WTC11 (cell line): ENCODE measurements at regions of chr19 and their contacts with region 1.

Region 1: DNA sequence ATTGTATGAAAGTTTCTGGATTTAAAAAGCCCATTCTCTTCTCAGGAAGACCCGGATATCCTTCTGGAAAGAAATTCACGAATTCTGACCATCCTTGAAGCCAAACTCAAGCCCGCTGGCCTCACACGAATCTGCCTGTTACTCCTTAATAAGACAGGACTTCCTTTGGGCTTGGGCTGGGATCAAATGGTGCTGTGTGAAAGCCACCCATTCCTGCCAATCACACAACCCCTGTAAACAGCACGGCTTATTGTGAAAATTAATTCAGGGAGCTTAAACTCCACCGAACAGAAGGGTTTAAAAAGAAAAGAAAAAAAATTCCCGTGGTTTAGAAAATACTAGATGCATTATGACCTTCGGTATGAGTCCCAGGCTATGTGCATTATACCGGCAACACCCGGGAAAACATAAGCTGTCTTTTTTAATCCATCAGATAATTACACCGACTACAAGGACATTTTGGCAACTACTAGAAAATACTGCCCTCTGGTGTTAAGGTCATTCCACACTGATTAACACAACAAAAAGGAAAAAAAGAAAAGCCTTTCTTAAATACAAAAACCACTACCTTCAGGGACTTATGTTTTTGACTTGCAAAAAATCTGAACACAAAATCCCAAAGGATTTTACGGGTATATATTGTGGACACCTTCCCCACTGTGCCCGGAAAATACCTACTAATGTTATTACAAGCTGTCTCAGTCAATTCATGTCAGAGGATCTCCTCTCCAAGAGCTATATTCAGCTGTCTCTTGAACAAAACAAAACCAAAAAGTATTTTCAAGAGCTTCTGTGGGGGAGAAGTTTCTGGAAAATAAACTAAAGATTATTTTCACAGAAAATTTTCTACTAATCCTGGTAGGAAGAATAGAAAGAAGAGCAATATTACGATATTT is 76.0 kb upstream of the LSM14A start:
- DNase-seq: peak; percentile 16
- ATAC-seq: peak; percentile 76
- H3K4me3 Mint-ChIP-seq: peak overlapping the region; percentile 56
- H3K27ac Mint-ChIP-seq: no peak overlapping the region; the same call in 1 of the 2 replicates
- H3K4me1 Mint-ChIP-seq: peaks cover 11% of the 10 kb centered on the region; the same call in 1 of the 2 replicates
- H3K27me3 Mint-ChIP-seq: no peaks in the 10 kb centered on the region
- CTCF ChIP-seq: peak; percentile 62

Region 2: GRCh38 chr19:33795370-33796163 is 300.7 kb before region 1 on chr19:
- CTCF ChIA-PET with region 1: interaction called, 27 read pairs
- POLR2A ChIA-PET with region 1: interaction called, 3 read pairs
- DNase-seq: peak; percentile 88
- ATAC-seq: peak; percentile 66
- H3K4me3 Mint-ChIP-seq: peak overlapping the region; percentile 68
- H3K27ac Mint-ChIP-seq: no peak overlapping the region; the same call in 1 of the 2 replicates
- H3K4me1 Mint-ChIP-seq: peaks cover 45% of the 10 kb centered on the region
- H3K27me3 Mint-ChIP-seq: 0 out of 2 replicates have a peak, but pooled peaks cover 3% of the 10 kb centered on the region
- CTCF ChIP-seq: peak; percentile 75

Region 3: GRCh38 chr19:33883859-33884519 is 212.3 kb before region 1 on chr19:
- CTCF ChIA-PET with region 1: interaction called, 11 read pairs
- POLR2A ChIA-PET with region 1: no interaction called
- DNase-seq: peak; percentile 56
- ATAC-seq: peak; percentile 79
- H3K4me3 Mint-ChIP-seq: peak overlapping the region; percentile 57
- H3K27ac Mint-ChIP-seq: peak overlapping the region; percentile 97
- H3K4me1 Mint-ChIP-seq: peaks cover 49% of the 10 kb centered on the region
- H3K27me3 Mint-ChIP-seq: no peaks in the 10 kb centered on the region
- CTCF ChIP-seq: no peak

Region 4: GRCh38 chr19:33982706-33983105 is 113.6 kb before region 1 on chr19:
- CTCF ChIA-PET with region 1: no interaction called
- POLR2A ChIA-PET with region 1: no interaction called
- DNase-seq: no peak
- ATAC-seq: no peak
- H3K4me3 Mint-ChIP-seq: no peak overlapping the region
- H3K27ac Mint-ChIP-seq: no peak overlapping the region
- H3K4me1 Mint-ChIP-seq: no peaks in the 10 kb centered on the region
- H3K27me3 Mint-ChIP-seq: peaks cover 2% of the 10 kb centered on the region; the same call in 1 of the 2 replicates
- CTCF ChIP-seq: no peak

Region 5: GRCh38 chr19:33998739-33999345 is 97.4 kb before region 1 on chr19:
- CTCF ChIA-PET with region 1: interaction called, 13 read pairs
- POLR2A ChIA-PET with region 1: no interaction called
- DNase-seq: no peak
- ATAC-seq: no peak
- H3K4me3 Mint-ChIP-seq: no peak overlapping the region
- H3K27ac Mint-ChIP-seq: no peak overlapping the region
- H3K4me1 Mint-ChIP-seq: peaks cover 10% of the 10 kb centered on the region
- H3K27me3 Mint-ChIP-seq: no peaks in the 10 kb centered on the region
- CTCF ChIP-seq: no peak

Region 6: DNA sequence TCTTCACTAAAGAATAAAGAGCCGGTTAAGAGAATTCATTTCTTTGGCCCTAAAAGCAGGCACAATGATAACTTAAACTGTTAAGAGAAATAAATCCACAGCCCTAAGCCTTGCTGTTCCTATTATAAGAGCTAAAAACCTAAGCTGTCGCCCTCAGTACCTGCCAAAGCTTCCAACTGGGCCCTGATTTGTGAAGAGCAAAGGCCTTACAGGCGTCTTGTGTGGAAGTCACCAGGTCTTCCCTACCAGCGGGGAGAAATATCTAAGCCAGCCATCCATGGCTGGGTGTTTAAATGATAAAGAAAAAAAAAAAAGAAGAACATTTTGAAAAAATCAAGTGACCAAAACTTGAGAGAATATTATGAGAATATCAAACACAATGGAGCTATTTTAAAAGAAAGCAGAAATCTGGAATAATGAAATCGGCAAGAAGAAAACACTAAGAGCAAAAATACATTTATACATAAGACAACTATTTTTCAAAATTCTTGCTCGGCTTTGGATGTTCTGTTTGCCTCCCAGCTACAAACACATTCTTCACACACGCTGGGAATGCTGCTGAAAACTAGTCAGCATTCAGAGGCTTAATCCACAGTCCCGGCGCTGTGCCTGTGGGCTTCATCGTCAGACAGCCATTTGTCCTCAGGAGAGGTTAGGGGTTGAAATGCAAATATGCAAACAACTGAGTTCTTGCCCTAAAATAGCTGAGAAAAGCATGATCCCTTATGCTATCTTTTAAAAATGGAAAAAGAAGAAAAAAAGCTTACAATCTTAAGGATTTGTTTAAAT is 13.8 kb before region 1 on chr19:
- CTCF ChIA-PET with region 1: interaction called, 26 read pairs
- POLR2A ChIA-PET with region 1: no interaction called
- DNase-seq: peak; percentile 38
- ATAC-seq: peak; percentile 78
- H3K4me3 Mint-ChIP-seq: no peak overlapping the region
- H3K27ac Mint-ChIP-seq: peak overlapping the region; percentile 90
- H3K4me1 Mint-ChIP-seq: peaks cover 38% of the 10 kb centered on the region
- H3K27me3 Mint-ChIP-seq: no peaks in the 10 kb centered on the region
- CTCF ChIP-seq: no peak

Region 7: GRCh38 chr19:34184880-34185491 is 88.7 kb after region 1 on chr19:
- CTCF ChIA-PET with region 1: no interaction called
- POLR2A ChIA-PET with region 1: no interaction called
- DNase-seq: no peak
- ATAC-seq: no peak
- H3K4me3 Mint-ChIP-seq: no peak overlapping the region
- H3K27ac Mint-ChIP-seq: peak overlapping the region; percentile 59
- H3K4me1 Mint-ChIP-seq: peaks cover 59% of the 10 kb centered on the region
- H3K27me3 Mint-ChIP-seq: no peaks in the 10 kb centered on the region
- CTCF ChIP-seq: no peak

Region 8: DNA sequence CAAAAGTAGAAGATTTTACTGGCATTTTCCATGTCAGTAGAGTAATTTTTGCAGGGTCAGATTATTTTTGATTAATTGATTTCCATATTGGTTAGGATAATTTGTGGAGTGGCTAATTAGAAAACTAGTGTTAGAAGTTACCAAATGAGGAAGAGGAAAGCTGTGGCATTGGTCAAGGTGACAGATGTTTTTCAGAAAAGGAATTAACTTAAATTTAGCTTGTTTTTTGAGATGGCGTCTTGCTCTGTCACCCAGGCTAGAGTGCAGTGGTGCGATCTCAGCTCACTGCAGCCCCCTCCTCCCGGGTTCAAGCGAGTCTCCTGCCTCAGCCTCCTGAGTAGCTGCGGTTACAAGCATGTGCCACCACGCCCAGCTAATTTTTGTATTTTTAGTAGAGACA is 104.9 kb after region 1 on chr19:
- CTCF ChIA-PET with region 1: no interaction called
- POLR2A ChIA-PET with region 1: no interaction called
- DNase-seq: no peak
- ATAC-seq: no peak
- H3K4me3 Mint-ChIP-seq: no peak overlapping the region
- H3K27ac Mint-ChIP-seq: no peak overlapping the region
- H3K4me1 Mint-ChIP-seq: no peaks in the 10 kb centered on the region
- H3K27me3 Mint-ChIP-seq: no peaks in the 10 kb centered on the region
- CTCF ChIP-seq: no peak

Region 9: GRCh38 chr19:34692549-34692948 is 596.3 kb after region 1 on chr19:
- CTCF ChIA-PET with region 1: no interaction called
- POLR2A ChIA-PET with region 1: no interaction called
- DNase-seq: no peak
- ATAC-seq: no peak
- H3K4me3 Mint-ChIP-seq: no peak overlapping the region
- H3K27ac Mint-ChIP-seq: no peak overlapping the region
- H3K4me1 Mint-ChIP-seq: peaks cover 4% of the 10 kb centered on the region; the same call in 1 of the 2 replicates
- H3K27me3 Mint-ChIP-seq: peaks cover 25% of the 10 kb centered on the region
- CTCF ChIP-seq: no peak